ENCODE measurements at regions of chr1 and their contacts with region 1.

Region 1: DNA sequence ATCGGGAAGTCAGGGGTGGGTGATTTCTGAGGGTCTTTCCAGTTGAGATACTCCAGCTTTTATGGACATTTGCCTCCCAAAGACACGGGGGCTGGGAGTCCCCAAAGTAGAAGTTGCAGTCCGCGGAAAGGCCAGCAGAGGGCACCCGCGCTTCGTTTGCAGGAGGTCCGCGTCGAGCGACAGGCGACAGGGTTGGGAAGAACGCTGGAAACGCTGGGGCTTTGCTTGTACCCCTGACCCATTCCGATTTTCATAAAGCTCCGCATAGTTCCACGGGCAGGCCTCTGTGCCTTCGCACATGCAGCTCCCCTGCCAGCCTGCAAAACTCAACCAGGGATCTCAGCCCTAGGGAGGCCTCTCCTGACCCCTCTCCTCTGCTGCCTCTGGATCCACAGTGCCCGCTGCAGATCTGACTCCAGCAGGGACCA is 44.2 kb upstream of the LAPTM5 start:
- DNase-seq: peak; percentile 57 to 74 (median 63)
- H3K4me3 ChIP-seq: no peak overlapping the region
- H3K27ac ChIP-seq: no peak overlapping the region
- H3K4me1 ChIP-seq: peaks cover 0 to 12% (median 10%) of the 10 kb centered on the region in 4 experiments
- H3K27me3 ChIP-seq: peaks cover 5 to 56% (median 49%) of the 10 kb centered on the region in 5 experiments

Region 2: DNA sequence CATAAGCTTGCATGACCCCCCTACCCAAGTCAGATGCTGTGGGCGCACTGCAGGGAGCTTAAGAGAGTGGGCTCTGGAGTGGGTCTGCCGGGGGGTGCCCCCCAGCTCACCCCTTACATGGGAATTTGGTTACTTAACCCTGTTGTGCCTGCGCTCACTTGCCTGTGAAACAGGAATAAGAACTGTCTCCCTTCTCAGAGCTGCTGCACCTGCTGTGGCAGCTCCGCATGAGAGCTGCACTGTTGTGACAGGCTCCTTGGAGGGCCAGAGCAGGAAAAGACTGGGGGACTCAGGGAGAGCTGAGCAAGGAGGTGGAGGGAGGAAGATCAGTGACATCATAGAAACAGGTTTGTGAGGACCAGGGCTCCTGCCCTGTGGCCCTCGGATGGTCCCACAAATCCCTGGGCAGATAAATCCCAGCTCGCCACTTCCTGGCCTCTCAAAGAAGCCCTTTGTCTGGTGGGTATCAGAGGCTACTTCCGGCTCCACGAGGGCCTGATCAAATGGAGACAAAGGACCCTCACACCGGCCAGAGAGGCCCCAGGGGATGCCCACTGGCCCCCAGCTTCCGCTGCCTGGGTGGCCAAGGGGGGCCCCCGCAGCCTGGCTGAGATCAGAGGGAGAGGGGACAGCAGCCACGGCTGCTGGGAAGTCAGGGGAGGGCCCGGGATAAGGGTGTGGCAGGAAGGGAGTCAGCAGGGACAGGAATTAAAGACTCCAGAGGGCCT is 15.4 kb before region 1 on chr1:
- CTCF ChIA-PET with region 1: interaction called, 33 read pairs
- POLR2A ChIA-PET with region 1: no interaction called
- DNase-seq: no peak
- H3K4me3 ChIP-seq: no peak overlapping the region
- H3K27ac ChIP-seq: no peak overlapping the region
- H3K4me1 ChIP-seq: peaks cover 0 to 28% (median 12%) of the 10 kb centered on the region in 4 experiments
- H3K27me3 ChIP-seq: peaks cover 0 to 12% (median 5%) of the 10 kb centered on the region in 5 experiments

Region 3: GRCh38 chr1:30853350-30853749 is 51.6 kb after region 1 on chr1:
- CTCF ChIA-PET with region 1: interaction called, 17 read pairs
- POLR2A ChIA-PET with region 1: no interaction called
- DNase-seq: no peak
- H3K4me3 ChIP-seq: no peak overlapping the region
- H3K27ac ChIP-seq: no peak overlapping the region
- H3K4me1 ChIP-seq: peaks cover 0 to 4% (median 3%) of the 10 kb centered on the region in 4 experiments
- H3K27me3 ChIP-seq: peaks cover 6 to 78% (median 39%) of the 10 kb centered on the region in 5 experiments

Region 4: DNA sequence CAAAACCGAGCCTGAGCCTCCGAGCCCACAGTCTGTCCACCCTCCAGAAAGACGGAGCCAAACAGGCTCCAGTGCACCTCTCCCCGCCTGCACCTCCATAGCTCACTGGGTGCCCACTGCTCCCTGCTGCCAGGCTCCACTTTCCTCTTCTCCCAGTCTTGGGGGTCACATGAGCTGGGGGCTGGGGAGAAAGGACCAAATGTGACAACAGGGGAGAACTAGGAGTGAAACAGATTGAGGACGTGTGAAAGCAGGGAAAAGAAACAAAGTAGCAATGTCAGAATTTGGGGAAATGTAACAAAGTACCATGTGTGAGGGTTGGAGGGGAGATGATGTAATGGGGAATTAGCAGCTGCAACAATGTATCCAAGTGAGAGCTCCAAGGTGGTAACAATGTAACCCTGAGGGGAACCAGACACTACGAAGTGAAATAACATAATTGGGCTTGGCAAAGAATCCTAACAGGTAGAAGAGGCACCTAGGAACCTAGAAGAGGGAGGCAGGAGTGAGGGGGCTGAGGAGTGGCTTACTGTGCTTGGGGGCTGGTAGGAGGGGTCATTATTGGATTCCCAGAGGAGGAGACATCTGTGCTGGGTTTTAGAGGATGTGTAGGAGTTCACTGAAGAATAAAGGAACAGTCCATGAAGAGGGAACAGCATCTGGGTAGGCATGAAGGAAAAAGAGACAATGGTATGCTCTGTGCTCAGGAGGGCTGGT is 94.3 kb after region 1 on chr1:
- CTCF ChIA-PET with region 1: interaction called, 19 read pairs
- POLR2A ChIA-PET with region 1: no interaction called
- DNase-seq: no peak
- H3K4me3 ChIP-seq: no peak overlapping the region
- H3K27ac ChIP-seq: no peak overlapping the region
- H3K4me1 ChIP-seq: peaks cover 0 to 4% (median 2%) of the 10 kb centered on the region in 4 experiments
- H3K27me3 ChIP-seq: peaks cover 0 to 85% (median 28%) of the 10 kb centered on the region in 5 experiments

Region 5: DNA sequence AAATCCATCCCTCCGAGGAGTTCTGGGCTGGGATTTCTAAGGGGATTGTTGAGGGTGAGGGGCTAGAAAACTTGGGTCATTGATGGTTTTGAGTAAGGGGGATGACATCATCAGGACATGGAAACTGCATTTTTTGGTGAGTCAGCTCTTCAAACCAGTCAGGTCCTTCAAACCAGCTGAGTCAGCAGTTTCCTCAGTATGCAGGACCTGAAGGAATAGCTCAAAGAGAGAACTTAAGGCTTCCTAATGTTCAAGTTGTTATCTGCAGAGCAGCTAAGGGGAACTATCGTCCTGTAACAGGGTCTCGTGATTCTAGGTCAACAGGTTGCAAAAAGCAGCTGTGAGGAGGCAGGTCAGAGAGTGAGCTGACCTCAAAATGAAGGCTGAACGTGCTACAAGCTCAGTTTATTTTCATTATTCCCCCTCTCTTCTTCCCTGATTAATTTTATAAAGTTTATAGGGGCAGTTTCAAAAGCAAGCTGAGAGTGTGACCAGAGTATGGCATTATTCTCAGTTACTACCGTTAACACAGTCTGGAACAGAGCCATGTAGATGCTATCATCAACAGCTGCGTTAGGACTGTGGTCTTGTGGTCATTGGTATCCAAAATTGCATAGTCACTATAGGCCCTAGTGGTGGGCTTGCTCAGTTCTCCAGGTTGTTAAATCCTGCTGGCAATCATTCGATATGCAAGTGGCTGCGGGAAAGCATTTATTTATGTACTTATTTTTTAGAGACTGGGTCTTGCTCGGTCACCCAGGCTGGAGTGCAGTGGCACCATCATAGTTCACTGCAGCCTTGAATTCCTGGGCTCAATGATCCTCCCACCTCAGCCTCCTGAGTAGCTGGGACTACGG is 117.5 kb after region 1 on chr1:
- CTCF ChIA-PET with region 1: interaction called, 252 read pairs
- POLR2A ChIA-PET with region 1: no interaction called
- DNase-seq: peak; percentile 95 to 99 (median 99)
- H3K4me3 ChIP-seq: peak overlapping the region in 2 of 7 experiments; percentile 11 to 62
- H3K27ac ChIP-seq: peak overlapping the region in 1 of 2 experiments; percentile 75
- H3K4me1 ChIP-seq: peaks cover 0 to 28% (median 26%) of the 10 kb centered on the region in 4 experiments
- H3K27me3 ChIP-seq: peaks cover 0 to 6% (median 2%) of the 10 kb centered on the region in 5 experiments

Region 6: DNA sequence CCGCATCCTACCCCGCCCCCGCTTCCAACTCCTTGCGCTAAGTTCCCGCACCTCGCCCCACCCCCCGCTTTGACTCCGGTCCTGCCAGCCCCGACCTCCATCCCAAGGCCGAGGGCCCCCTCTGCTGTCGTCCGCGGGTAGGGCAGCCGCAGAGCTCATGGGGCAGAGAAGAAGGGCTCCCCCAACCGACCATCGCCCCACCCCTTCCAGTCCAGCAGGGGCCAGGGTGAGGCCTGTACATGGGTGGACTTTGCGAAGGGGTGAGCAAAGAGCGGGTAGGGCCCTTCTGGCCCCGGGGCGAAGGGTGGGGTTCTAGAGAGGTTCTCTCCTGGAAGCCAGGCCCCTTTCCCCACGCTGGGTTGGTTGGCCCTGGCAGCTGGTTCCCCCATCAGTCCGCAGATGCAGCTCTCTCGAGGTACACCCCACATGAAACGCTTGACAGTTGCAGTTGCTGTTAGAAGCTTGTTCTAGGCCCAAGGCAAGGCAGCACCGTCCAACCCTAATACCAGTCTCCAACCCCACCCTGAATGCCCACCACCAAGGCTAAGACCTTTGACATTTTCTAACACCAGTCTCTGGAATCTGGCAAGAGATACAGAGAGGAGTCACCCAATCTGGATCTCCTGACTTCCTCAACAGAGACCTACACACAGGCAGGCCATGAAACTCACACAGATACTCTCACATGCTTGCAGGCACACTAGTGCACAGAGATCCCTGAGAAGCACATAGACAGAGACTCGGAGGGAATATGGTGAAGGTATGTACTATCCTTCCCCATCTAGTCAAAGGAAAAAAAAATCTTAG is 987.7 kb after region 1 on chr1:
- CTCF ChIA-PET with region 1: no interaction called
- POLR2A ChIA-PET with region 1: no interaction called
- DNase-seq: peak; percentile 86 to 92 (median 89)
- H3K4me3 ChIP-seq: peak overlapping the region; percentile 42 to 94 (median 78)
- H3K27ac ChIP-seq: no peak overlapping the region
- H3K4me1 ChIP-seq: peaks cover 0 to 17% (median 12%) of the 10 kb centered on the region in 4 experiments
- H3K27me3 ChIP-seq: peaks cover 0 to 7% (median 0%) of the 10 kb centered on the region in 5 experiments

Measured in common myeloid progenitor, CD34-positive (primary cell).